Activated naive CD4-positive, alpha-beta T cell treated with anti-CD3 and anti-CD28 coated beads, Interleukin-2, amount 10 ng/mL, durations not matched to agents 7 days and 5 days (primary cell): ENCODE measurements at regions of chr1 and their contacts with region 1.

Region 1: DNA sequence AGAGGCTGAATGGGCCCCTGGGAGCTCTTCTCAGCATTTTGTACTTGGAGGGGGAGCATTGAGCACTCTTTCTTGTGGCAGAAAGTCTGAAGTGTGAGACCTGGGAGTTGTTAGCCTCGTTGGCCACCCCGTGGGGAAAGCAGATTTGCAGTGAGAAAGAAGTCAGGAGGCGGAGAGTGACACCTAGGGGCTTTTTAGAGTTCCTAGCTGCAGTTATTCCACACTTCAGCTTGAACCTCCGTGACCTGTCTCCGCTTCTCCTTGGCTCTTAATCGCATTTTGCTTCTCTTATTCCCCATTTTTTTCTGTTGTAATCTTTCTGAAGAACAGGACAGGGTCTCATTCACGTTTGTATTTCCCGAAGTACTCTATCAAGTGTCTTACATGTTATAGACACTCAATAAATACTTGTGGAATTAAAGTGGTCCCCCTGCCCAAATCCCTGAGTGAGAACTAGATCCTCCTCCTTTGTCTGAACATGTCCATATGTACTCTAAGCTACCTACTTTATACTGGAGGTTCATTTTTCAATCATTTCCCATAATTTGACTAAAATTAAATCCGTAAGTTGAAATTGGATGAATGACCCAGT is 14.5 kb upstream of the C1orf141 start:
- DNase-seq: peak; percentile 76
- H3K4me3 Mint-ChIP-seq: no peak overlapping the region
- H3K27ac Mint-ChIP-seq: no peak overlapping the region
- H3K4me1 Mint-ChIP-seq: peaks cover 27% of the 10 kb centered on the region
- H3K27me3 Mint-ChIP-seq: no peaks in the 10 kb centered on the region

Region 2: GRCh38 chr1:66613187-66613586 is 536.1 kb before region 1 on chr1:
- CTCF ChIA-PET with region 1: no interaction called
- DNase-seq: no peak
- H3K4me3 Mint-ChIP-seq: no peak overlapping the region
- H3K27ac Mint-ChIP-seq: no peak overlapping the region
- H3K4me1 Mint-ChIP-seq: no peaks in the 10 kb centered on the region
- H3K27me3 Mint-ChIP-seq: peaks cover 11% of the 10 kb centered on the region

Region 3: GRCh38 chr1:66764994-66765578 is 384.2 kb before region 1 on chr1:
- CTCF ChIA-PET with region 1: interaction called, 29 read pairs
- DNase-seq: peak; percentile 68
- H3K4me3 Mint-ChIP-seq: no peak overlapping the region
- H3K27ac Mint-ChIP-seq: no peak overlapping the region
- H3K4me1 Mint-ChIP-seq: peaks cover 16% of the 10 kb centered on the region
- H3K27me3 Mint-ChIP-seq: no peaks in the 10 kb centered on the region

Region 4: GRCh38 chr1:66996018-66996682 is 153.1 kb before region 1 on chr1:
- CTCF ChIA-PET with region 1: interaction called, 56 read pairs
- DNase-seq: peak; percentile 79
- H3K4me3 Mint-ChIP-seq: no peak overlapping the region
- H3K27ac Mint-ChIP-seq: no peak overlapping the region
- H3K4me1 Mint-ChIP-seq: peaks cover 16% of the 10 kb centered on the region
- H3K27me3 Mint-ChIP-seq: no peaks in the 10 kb centered on the region

Region 5: GRCh38 chr1:67053785-67054772 is 95.2 kb before region 1 on chr1 and contains the start of gene SLC35D1:
- CTCF ChIA-PET with region 1: interaction called, 13 read pairs
- DNase-seq: peak; percentile 84
- H3K4me3 Mint-ChIP-seq: peak within 1 kb of the TSS; percentile 82
- H3K27ac Mint-ChIP-seq: peak within 1 kb of the TSS; percentile 92
- H3K4me1 Mint-ChIP-seq: peaks cover 31% of the 10 kb centered on the region
- H3K27me3 Mint-ChIP-seq: peaks cover 4% of the 10 kb centered on the region

Region 6: DNA sequence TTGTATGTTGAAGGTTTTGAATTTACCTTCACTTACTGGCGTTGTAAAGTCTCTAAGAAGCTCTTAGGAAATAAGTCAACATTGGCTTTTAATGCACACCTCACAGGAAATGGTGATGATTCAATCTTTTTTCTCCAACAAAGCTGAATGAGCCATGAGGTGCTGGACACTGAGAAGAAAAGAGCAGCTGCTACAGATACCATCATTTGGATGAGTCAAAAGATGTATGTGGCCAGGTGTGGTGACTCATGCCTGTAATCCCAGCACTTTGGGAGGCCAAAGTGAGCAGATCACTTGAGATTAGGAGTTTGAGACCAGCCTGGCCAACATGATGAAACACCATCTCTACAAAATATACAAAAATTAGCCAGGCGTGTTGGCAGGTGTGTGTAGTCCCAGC is 13.7 kb after region 1 on chr1:
- CTCF ChIA-PET with region 1: interaction called, 46 read pairs
- DNase-seq: peak; percentile 35
- H3K4me3 Mint-ChIP-seq: no peak overlapping the region
- H3K27ac Mint-ChIP-seq: peak overlapping the region; percentile 35
- H3K4me1 Mint-ChIP-seq: peaks cover 28% of the 10 kb centered on the region
- H3K27me3 Mint-ChIP-seq: no peaks in the 10 kb centered on the region

Region 7: GRCh38 chr1:67171978-67172377 is 22.7 kb after region 1 on chr1:
- CTCF ChIA-PET with region 1: interaction called, 17 read pairs
- DNase-seq: no peak
- H3K4me3 Mint-ChIP-seq: no peak overlapping the region
- H3K27ac Mint-ChIP-seq: peak overlapping the region; percentile 85
- H3K4me1 Mint-ChIP-seq: peaks cover 63% of the 10 kb centered on the region
- H3K27me3 Mint-ChIP-seq: peaks cover 4% of the 10 kb centered on the region

Region 8: GRCh38 chr1:67500413-67500959 is 351.2 kb after region 1 on chr1:
- CTCF ChIA-PET with region 1: interaction called, 16 read pairs
- DNase-seq: peak; percentile 92
- H3K4me3 Mint-ChIP-seq: peak overlapping the region; percentile 18
- H3K27ac Mint-ChIP-seq: no peak overlapping the region
- H3K4me1 Mint-ChIP-seq: peaks cover 5% of the 10 kb centered on the region
- H3K27me3 Mint-ChIP-seq: peaks cover 21% of the 10 kb centered on the region